Sigmoid colon (tissue), 7 donors: ENCODE measurements at regions of chr9 and their contacts with region 1.

Region 1: DNA sequence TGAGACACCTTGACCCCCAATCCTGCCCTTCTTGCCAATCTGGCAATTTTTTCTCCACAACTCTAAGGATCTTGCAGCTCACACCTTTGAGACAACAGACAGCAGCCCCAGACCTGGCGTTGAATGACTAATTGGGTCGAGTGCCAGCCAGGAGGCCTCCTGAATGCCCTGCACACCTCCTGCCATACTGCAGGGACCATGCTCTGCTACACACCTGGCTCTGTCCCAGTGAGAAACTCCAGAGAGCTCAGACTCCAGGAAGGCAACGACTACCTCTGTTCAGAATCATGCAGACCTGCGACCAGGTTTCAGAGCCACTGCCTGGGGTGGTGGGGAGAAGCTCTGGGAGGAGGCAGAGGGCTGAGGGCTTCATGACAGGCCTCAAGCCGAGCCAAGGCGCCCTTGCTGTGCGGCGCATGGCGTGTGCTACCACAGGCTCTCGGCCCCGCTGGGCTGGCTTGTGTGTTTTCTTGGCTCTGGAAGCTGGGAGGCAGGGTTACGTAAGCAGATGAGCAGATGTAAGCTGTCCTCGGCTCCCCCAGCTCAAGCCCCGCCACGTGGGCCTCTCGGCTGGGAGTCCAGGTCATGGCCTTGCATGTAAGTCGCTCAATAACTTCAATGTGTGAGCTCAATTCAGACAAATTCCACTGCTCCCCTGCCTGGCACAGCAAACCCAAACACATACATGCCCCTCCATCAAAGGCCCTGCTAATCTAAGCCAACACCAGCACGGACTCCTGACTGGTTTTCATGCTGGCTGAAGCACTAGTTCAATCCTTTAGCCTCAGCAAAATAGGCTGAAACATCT is 27.5 kb downstream of the B4GALT1 start:
- DNase-seq: peak; percentile 93
- H3K4me3 ChIP-seq: no peak overlapping the region
- H3K27ac ChIP-seq: peak overlapping the region; percentile 59 to 78 (median 67)
- H3K4me1 ChIP-seq: peaks cover 0 to 83% (median 41%) of the 10 kb centered on the region in 4 donors
- H3K27me3 ChIP-seq: no peaks in the 10 kb centered on the region
- CTCF ChIP-seq: no peak
- EP300 ChIP-seq: no peak
- POLR2A ChIP-seq: no peak

Region 2: GRCh38 chr9:31969552-31969951 is 1170.1 kb before region 1 on chr9:
- intact Hi-C with region 1: no loop called
- DNase-seq: no peak
- H3K4me3 ChIP-seq: no peak overlapping the region
- H3K27ac ChIP-seq: no peak overlapping the region
- H3K4me1 ChIP-seq: no peaks in the 10 kb centered on the region
- H3K27me3 ChIP-seq: no peaks in the 10 kb centered on the region
- CTCF ChIP-seq: no peak
- EP300 ChIP-seq: no peak
- POLR2A ChIP-seq: no peak

Region 3: DNA sequence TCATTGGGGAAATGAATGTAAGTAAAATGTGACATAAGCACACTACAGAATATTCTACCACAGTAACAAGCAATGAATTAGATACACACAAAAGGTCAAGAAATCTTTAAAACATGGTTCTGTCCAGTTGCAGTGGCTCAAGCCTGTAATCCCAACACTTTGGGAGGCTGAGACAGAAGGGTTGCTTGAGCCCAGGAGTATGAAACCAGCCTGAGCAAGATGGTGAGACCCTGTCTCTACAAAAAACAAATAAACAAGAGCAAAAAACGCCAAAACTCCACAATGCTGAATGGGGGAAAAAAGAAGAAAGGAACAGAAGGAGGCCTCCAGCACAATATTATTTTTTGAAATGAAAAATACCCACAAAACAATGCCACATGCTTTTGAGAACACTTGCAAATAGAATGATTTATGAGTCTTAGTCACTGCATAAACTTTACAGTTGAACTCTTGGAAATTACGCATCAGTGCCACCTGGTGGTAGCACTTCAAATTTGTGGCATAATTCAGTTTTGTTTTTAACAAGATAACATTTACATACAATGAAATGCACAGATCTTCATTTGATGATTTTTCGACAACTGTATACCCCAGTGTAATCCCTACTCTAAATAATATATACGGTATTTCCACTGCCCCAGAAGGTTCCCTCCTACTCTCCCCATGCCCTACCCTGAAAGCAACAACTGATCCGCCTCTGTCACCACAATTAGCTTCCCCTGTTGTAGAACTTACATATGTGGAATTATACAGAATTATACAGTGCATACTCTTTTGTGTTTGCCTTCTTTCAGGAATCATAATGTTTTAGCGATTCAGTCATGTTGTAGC is 85.9 kb after region 1 on chr9:
- intact Hi-C with region 1: loop called (anchors 5 kb)
- DNase-seq: no peak
- H3K4me3 ChIP-seq: no peak overlapping the region
- H3K27ac ChIP-seq: no peak overlapping the region
- H3K4me1 ChIP-seq: peaks cover 0 to 8% (median 5%) of the 10 kb centered on the region in 4 donors
- H3K27me3 ChIP-seq: no peaks in the 10 kb centered on the region
- CTCF ChIP-seq: peak; percentile 68 to 89 (median 77)
- EP300 ChIP-seq: no peak
- POLR2A ChIP-seq: no peak